Activated B cell treated with CpG ODN at 0.5 μM for 24 hours (primary cell): ENCODE measurements at regions of chr1 and their contacts with region 1.

Region 1: DNA sequence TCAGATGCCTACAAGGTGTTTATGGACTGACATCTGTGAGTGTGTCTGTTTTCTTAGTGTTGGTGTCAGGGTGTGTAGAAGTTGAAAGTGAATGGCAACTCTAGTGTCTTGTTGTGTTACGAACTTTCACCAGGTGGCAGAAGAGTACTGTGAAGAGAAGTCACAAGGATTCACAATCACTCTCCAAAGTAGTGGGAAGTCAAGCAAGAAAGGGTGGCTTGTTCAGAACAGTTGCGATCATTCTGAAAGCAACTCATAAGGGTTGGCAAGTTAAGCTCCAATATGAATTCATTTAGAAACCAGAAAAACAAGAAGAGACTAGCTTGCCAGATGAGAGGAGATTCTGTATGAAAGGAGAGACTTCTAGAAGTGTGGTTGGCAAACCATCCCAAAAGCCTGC is 86.1 kb downstream of the FASLG start:
- DNase-seq: no peak
- ATAC-seq: peak; percentile 86
- H3K4me3 Mint-ChIP-seq: no peak overlapping the region
- H3K27ac Mint-ChIP-seq: peak overlapping the region; percentile 43
- H3K4me1 Mint-ChIP-seq: peaks cover 34% of the 10 kb centered on the region
- H3K27me3 Mint-ChIP-seq: peaks cover 4% of the 10 kb centered on the region
- CTCF ChIP-seq: peak; percentile 42

Region 2: GRCh38 chr1:172826096-172826743 is 81.2 kb after region 1 on chr1:
- CTCF ChIA-PET with region 1: interaction called, 42 read pairs
- POLR2A ChIA-PET with region 1: interaction called, 7 read pairs
- intact Hi-C with region 1: loop called (anchors 1 kb)
- DNase-seq: no peak
- ATAC-seq: peak; percentile 62
- H3K4me3 Mint-ChIP-seq: no peak overlapping the region
- H3K27ac Mint-ChIP-seq: no peak overlapping the region
- H3K4me1 Mint-ChIP-seq: peaks cover 2% of the 10 kb centered on the region
- H3K27me3 Mint-ChIP-seq: no peaks in the 10 kb centered on the region
- CTCF ChIP-seq: no peak

Region 3: GRCh38 chr1:173195596-173196088 is 450.6 kb after region 1 on chr1:
- CTCF ChIA-PET with region 1: interaction called, 249 read pairs
- POLR2A ChIA-PET with region 1: interaction called, 3 read pairs
- intact Hi-C with region 1: no loop called
- DNase-seq: peak; percentile 31
- ATAC-seq: peak; percentile 93
- H3K4me3 Mint-ChIP-seq: peak overlapping the region; percentile 61
- H3K27ac Mint-ChIP-seq: peak overlapping the region; percentile 88
- H3K4me1 Mint-ChIP-seq: peaks cover 36% of the 10 kb centered on the region
- H3K27me3 Mint-ChIP-seq: no peaks in the 10 kb centered on the region
- CTCF ChIP-seq: no peak

Region 4: DNA sequence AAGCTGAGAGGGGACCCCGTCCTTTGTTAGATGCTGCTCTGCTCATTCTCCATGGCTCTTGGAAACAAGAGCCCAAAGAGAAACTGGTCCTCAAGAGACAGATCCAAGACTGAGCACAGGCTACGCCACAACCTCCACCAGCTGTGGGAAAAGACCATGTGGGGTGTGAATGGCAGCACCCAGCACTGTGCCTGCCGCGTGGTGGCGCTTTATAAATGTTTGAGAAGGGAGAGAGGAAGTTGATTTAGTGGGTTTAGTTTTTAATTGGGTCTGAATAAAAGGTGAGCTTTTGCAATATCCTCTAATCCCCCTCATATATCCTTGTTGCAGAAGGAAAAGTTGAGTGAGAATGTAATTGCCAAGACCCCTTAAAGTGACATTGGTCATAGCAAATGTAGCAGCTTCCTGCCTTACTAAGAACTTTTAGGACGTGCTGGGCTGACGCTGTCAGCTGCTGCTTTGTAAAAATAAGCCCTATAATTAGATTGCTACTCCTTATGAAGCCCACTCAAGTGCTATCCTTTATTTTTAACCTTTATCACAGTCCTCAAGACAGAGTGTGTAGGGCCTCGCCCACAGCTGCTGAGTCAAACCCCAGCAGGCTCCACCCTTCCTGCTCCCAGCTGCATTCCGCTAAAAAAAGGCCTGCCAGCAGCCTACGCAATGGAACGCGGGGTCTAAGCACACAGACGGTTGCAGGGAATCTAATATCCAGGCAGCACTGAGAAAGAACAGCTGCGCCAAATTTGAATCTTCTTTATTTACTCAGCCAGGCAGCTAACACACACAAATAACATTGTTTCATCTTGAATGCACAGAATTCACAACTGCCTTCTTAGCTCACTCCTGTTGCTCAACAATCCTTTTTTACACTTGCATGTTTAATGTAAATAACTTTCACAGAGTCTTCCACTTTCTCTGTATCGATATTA is 684.7 kb after region 1 on chr1:
- CTCF ChIA-PET with region 1: interaction called, 57 read pairs
- POLR2A ChIA-PET with region 1: interaction called, 4 read pairs
- intact Hi-C with region 1: loop called (anchors 1 kb)
- DNase-seq: peak; percentile 54
- ATAC-seq: peak; percentile 87
- H3K4me3 Mint-ChIP-seq: peak overlapping the region; percentile 71
- H3K27ac Mint-ChIP-seq: peak overlapping the region; percentile 87
- H3K4me1 Mint-ChIP-seq: peaks cover 25% of the 10 kb centered on the region
- H3K27me3 Mint-ChIP-seq: no peaks in the 10 kb centered on the region
- CTCF ChIP-seq: no peak

Region 5: DNA sequence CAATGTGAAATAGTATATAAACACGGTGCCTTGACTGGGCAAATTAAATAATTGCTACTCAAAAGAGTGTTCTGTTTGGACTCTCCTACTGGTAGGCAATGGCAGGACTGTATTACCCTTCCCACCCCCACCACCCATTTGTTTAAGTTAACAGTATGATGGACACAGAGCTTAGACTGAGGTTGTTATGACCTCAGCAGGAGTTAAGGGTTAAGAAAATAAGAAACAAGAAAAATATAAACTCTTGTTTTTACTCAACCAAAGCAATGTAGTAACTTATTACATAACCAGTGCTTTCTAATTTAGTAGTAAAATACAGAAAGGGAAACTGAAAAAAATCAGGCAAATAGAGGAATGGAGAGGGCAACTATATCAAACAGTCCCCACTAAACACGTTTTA is 1192.0 kb after region 1 on chr1:
- CTCF ChIA-PET with region 1: interaction called, 3 read pairs
- POLR2A ChIA-PET with region 1: interaction called, 4 read pairs
- intact Hi-C with region 1: loop called (anchors 10 kb)
- DNase-seq: no peak
- ATAC-seq: no peak
- H3K4me3 Mint-ChIP-seq: no peak overlapping the region
- H3K27ac Mint-ChIP-seq: no peak overlapping the region
- H3K4me1 Mint-ChIP-seq: no peaks in the 10 kb centered on the region
- H3K27me3 Mint-ChIP-seq: no peaks in the 10 kb centered on the region
- CTCF ChIP-seq: no peak

Region 6: DNA sequence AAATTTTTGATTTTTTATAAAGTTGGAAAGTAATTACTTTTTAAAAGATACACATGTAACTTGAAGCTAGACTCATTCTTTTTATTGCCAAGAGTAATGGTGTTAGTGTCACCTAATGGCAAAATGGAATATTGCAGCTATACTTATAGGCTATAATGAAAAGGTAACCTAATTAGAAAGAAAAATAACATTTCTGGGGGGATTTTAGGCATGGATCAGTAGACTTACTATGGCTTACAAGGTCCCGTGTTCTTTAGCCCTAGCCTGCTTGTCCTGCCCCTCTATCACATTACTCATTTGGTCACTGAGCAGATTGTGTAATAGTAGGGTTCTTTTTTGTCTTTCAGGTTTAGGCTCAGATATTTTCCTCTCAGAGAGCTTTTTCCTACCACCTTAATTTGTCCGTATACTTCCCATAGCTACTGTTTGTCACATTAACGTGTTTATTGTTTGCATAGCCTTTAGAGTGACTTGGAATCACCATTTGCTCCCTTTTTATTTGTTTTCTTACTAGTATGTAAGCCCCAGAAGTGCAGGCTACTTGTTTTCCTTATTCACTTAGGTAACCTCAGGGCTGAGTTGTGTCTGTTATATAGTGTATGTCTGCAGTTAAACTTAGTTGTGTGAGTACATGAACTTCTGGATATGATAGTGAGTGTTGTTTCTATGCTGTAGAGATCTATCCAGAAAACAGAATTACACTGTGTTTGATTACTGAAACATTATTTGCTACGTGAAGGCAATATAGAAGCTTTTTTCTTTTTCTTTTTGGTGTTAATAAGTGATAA is 1473.0 kb after region 1 on chr1:
- CTCF ChIA-PET with region 1: interaction called, 5 read pairs
- POLR2A ChIA-PET with region 1: no interaction called
- intact Hi-C with region 1: loop called (anchors 1 kb)
- DNase-seq: no peak
- ATAC-seq: peak; percentile 81
- H3K4me3 Mint-ChIP-seq: no peak overlapping the region
- H3K27ac Mint-ChIP-seq: no peak overlapping the region
- H3K4me1 Mint-ChIP-seq: peaks cover 28% of the 10 kb centered on the region
- H3K27me3 Mint-ChIP-seq: no peaks in the 10 kb centered on the region
- CTCF ChIP-seq: peak; percentile 23